Psoas muscle (tissue), 8 donors: ENCODE measurements at regions of chr6 and their contacts with region 1.

Region 1: DNA sequence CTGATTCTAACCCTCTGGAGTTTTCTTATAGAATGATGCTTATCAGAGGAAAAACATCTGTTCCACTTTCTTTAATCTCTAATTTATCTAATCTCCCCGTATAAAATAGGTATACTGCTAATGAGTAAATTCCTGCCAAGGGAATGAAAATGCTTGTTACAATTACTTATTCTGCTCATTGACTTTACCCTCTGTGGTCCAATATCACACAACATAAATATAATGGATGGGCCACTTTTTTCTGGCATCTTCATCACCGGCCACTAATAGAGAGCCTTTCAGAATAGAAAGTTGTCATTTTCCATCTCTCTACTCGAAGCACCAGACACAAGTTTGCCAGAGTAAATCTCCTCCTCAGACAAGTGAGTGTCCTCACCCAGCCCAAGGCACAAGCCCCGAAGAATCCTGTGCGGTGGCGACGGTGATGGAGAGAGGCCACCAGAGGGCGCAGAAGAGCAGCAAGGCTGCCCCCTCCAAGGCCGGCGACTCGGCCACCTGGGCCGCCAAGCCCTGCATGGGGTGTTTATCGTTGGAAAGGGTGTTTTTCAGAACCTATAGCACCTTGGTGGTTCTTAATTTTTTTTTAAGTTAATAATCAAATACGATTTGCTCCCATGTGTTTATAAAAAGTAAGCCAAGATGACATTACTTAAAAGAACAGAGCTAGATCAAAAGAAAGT is 212.9 kb upstream of the ARID1B start:
- DNase-seq: peak; percentile 80 to 88
- ATAC-seq: peak; percentile 97 to 99 (median 98)
- H3K4me3 ChIP-seq: no peak overlapping the region
- H3K27ac ChIP-seq: no peak overlapping the region
- H3K4me1 ChIP-seq: no peaks in the 10 kb centered on the region
- H3K27me3 ChIP-seq: peaks cover 0 to 6% (median 0%) of the 10 kb centered on the region in 3 donors
- CTCF ChIP-seq: peak; percentile 96

Region 2: GRCh38 chr6:155327326-155328073 is 1236.8 kb before region 1 on chr6:
- intact Hi-C with region 1: loop called in 1 of 2 experiments (anchors 5 kb)
- DNase-seq: peak; percentile 29 to 65
- ATAC-seq: peak; percentile 65 to 93 (median 73)
- H3K4me3 ChIP-seq: no peak overlapping the region
- H3K27ac ChIP-seq: no peak overlapping the region
- H3K4me1 ChIP-seq: peaks cover 5% of the 10 kb centered on the region
- H3K27me3 ChIP-seq: no peaks in the 10 kb centered on the region
- CTCF ChIP-seq: peak; percentile 92

Region 3: GRCh38 chr6:156776840-156777576 is 212.7 kb after region 1 on chr6 and contains the start of gene ARID1B:
- intact Hi-C with region 1: loop called (anchors 2 to 5 kb)
- DNase-seq: peak; percentile 89 to 92
- ATAC-seq: peak; percentile 75 to 81 (median 78)
- H3K4me3 ChIP-seq: peak within 1 kb of the TSS; percentile 84
- H3K27ac ChIP-seq: peak within 1 kb of the TSS; percentile 99
- H3K4me1 ChIP-seq: peaks cover 35% of the 10 kb centered on the region
- H3K27me3 ChIP-seq: no peaks in the 10 kb centered on the region
- CTCF ChIP-seq: no peak
- total RNA-seq, gene ARID1B: 53.1 to 61.1 (median 55.8) TPM

Region 4: DNA sequence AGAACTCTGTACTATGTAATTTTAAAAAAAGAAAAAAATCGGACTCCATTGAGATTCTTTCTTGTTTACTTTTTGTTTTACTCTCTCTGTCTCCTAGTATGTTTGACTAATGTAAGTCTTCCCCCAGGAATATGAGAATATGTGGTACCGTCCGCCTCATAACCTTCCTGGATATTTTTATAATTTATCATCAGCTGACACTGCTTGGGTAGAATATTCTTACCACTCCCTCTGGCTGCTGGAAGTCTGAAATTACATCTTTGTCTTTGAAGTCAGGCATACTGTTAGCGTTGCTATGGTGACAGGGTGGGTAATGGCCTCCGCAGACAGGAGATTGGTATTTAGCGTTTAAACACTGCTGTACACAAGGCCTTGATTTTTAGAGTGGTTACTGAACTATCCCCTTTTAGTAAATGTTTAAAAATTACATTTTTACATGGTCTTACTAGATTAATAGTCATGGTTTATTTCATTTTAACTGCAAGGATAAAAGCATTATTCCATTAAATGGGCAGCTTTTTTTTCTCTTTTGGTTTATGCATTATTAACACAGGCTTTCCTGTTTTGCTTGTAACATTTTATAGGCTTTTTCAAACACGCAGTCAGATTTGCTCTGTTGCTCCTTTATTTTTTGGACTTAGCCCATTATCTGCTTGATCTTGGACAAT is 389.3 kb after region 1 on chr6:
- intact Hi-C with region 1: loop called in 1 of 2 experiments (anchors 10 kb)
- DNase-seq: no peak
- ATAC-seq: peak; percentile 77 to 83 (median 80)
- H3K4me3 ChIP-seq: peak overlapping the region; percentile 50
- H3K27ac ChIP-seq: peak overlapping the region; percentile 89
- H3K4me1 ChIP-seq: peaks cover 97% of the 10 kb centered on the region
- H3K27me3 ChIP-seq: no peaks in the 10 kb centered on the region
- CTCF ChIP-seq: no peak

Region 5: DNA sequence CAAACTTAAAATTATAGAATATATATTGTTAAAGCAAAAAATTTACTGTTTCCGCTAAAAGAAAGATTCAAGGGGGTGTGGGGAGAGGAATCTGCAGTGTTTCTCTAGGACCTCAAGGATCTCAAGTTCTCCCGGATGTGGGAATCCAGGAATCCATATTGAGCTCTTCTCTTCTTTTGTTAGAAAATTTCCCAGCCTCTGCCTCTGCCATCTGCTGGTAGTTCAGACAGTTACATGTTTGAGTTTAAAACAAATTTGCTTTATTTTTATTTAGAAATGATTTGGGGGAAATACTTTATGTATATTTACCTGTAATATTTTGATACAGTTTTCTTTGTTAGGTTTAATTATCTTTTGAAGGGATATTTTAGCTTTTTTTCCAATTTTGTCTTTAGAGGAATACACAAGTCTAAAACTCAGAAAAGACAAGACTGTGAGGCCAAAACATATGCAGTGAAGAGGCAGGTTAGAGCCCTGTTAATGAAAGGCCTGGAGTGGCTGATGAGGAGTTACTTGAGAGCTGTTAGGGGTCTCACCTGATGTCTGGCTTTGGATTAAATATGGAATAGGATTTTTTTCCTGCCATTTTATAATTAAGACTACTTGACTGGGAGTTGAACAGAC is 481.7 kb after region 1 on chr6:
- intact Hi-C with region 1: loop called in 1 of 2 experiments (anchors 10 kb)
- DNase-seq: no peak
- ATAC-seq: peak; percentile 49 to 61 (median 55)
- H3K4me3 ChIP-seq: no peak overlapping the region
- H3K27ac ChIP-seq: peak overlapping the region; percentile 36
- H3K4me1 ChIP-seq: peaks cover 28% of the 10 kb centered on the region
- H3K27me3 ChIP-seq: no peaks in the 10 kb centered on the region
- CTCF ChIP-seq: peak; percentile 57